Activated T-helper 1 cell treated with anti-CD3 and anti-CD28 coated beads, Interleukin-12 subunit alpha, Interleukin-12 subunit beta, Interleukin-2, Interleukin-4 antibody, amounts not matched to agents 30 ng/mL and 10 ng/mL and 1 ng/mL, durations not matched to agents 14 hours and 24 hours and 36 hours (primary cell): ENCODE measurements at regions of chrX and their contacts with region 1.

Region 1: DNA sequence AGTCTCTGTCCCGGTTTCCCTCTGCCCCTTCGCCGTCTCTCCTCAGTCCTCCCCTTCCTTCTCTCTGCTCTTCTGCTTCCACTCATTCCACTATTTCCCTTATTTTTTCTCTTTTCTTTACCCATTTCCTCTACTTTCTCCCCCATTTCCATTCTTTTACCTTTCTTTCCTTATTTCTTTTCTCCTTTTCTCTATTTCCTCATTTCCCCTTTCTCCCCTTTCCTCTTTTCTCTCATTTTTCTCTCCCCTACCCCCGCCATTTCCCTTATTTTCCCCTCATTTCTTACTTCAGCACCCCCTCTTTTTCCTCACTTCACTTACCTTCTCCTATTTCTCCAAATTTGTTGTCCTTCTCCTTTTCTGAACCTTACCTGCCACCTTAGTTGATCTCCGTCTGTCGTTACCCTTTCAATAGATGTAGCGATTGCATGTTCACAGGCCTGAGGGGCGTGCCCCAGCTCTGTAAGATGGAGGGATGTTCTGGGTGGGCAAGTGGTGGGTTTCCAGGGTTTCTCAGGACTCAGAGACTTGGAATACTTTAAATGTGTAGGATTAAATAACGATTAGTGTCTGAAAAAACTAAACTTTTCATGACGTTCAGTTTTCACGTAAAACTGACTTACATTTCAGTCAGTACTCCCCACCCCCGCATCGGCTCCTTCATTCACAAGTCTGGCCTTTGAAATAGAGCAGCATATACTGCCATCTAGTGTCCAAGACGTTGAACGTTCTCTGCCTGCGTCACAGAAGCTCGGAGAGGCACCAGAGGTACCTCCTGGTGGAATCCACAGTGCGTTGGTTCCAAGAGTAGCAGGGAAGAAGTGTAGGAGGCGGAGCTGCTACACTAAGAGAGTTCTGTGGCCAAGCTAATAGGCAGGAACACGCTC is 641 bp upstream of the NCBP2L start:
- DNase-seq: peak; percentile 62
- H3K4me3 Mint-ChIP-seq: peak overlapping the region; percentile 87
- H3K27ac Mint-ChIP-seq: peak overlapping the region; percentile 71
- H3K4me1 Mint-ChIP-seq: peaks cover 13% of the 10 kb centered on the region
- H3K27me3 Mint-ChIP-seq: peaks cover 12% of the 10 kb centered on the region

Region 2: DNA sequence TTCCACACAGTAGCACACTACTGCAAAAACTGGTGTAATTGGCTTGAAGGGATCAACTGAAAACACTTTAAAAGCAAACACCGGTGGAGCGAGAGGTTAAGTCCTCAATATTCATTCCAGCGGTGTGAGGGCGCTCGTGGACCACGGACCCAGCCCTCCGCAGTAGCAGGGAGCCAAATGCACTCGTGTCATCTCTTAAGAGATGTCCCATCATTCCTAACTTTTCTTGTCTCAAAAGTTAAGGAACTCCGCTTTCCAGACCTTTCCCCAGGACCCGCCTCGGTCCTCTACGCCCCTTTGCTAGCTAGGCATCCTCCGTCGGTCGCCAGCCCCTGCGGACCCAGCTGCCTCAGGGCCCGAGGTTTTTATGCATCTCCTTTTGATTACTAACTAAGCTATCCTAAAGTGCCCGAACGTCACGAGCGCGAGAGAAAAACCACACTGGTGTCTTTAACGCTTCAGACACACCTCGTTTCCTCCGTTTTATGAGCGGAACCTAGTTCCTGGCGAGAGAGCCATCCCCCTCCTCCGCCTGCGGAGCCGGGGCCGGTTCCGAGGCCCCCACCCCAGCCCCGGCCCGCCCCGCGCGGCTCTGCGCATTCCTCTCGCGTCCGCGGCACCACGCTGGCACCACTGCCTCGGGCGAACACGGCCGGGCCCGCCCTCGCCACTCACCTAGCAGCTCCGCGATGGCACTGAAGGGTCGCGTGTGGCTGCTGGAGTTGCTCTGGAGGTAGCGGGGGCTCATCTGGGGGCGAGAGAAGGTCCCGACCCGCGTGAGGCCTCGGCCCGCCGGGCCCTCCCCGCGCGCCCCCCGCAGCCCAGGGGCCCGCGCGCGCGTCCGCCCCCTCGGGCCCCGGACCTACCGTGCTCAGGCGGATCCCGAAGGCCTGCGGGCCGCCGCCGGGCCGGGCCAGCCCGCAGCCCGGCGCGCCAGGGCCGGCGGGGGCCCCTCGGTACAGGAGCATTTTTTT is 777.6 kb before region 1 on chrX:
- intact Hi-C with region 1: loop called (anchors 5 kb)
- DNase-seq: peak; percentile 12
- H3K4me3 Mint-ChIP-seq: peak overlapping the region; percentile 87
- H3K27ac Mint-ChIP-seq: no peak overlapping the region
- H3K4me1 Mint-ChIP-seq: peaks cover 12% of the 10 kb centered on the region
- H3K27me3 Mint-ChIP-seq: peaks cover 3% of the 10 kb centered on the region

Region 3: DNA sequence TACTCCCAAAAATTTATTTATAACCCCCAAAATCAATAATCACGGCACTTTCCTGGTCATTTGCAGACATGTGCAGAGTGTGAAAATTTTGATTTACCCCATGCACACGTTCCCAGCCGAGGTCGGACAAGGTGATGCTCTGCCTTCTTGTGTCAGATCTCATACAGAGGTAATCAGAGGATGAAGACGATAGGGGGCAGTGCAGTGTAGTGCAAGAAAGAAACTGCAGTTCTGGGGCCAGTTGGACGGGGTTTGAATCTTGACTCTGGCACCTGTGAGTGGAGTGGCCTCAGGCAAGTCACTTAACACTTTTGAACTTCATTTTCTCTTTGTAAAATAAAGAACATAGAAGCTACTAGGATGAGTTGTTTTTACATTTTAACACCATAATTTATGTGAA is 239.1 kb before region 1 on chrX:
- intact Hi-C with region 1: loop called (anchors 1 kb)
- DNase-seq: peak; percentile 6
- H3K4me3 Mint-ChIP-seq: no peak overlapping the region
- H3K27ac Mint-ChIP-seq: no peak overlapping the region
- H3K4me1 Mint-ChIP-seq: no peaks in the 10 kb centered on the region
- H3K27me3 Mint-ChIP-seq: peaks cover 8% of the 10 kb centered on the region

Region 4: DNA sequence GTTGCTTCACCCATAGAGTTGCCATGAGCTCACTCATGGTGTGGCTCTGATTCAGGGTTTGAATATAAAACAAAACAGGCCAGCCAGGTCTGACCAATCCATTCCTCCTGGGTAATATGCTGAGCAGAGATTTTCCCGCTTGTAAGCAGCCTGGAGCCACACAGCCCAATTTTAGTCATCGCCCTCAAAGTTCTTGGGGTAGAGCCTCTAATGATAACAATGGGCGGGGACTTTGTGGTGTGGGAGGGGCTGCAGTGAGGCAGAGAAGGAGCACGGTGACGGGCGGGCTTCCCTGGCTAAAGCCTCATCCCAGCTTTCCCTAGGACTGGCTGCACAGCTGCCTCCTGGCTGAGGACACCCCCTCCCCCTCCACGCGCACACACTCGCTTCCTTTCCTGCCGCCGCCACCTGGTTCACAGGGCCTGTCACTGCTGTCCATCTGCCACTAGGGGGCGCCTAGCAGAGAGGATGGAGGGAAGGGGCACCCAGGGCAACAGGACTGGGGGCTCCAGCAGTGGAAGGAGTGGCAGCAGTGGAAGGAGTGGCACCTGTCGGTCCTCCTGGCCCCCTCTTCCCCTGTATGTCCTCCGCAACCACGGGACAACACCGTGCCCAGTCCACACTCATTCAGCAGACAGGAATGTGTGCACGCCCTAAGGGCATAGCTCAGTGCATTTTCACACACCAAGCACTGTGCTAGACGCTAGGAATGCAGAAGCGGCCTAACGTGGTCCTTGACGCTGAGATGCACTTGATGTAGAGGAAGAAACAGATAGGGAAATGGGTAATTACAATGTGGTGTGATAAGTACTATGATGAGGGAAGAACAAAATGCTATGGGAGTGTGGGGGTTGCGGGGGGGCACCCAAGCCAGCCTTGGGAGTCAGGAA is 121.8 kb before region 1 on chrX:
- intact Hi-C with region 1: loop called (anchors 1 kb)
- DNase-seq: peak; percentile 38
- H3K4me3 Mint-ChIP-seq: no peak overlapping the region
- H3K27ac Mint-ChIP-seq: no peak overlapping the region
- H3K4me1 Mint-ChIP-seq: peaks cover 7% of the 10 kb centered on the region
- H3K27me3 Mint-ChIP-seq: no peaks in the 10 kb centered on the region

Region 5: DNA sequence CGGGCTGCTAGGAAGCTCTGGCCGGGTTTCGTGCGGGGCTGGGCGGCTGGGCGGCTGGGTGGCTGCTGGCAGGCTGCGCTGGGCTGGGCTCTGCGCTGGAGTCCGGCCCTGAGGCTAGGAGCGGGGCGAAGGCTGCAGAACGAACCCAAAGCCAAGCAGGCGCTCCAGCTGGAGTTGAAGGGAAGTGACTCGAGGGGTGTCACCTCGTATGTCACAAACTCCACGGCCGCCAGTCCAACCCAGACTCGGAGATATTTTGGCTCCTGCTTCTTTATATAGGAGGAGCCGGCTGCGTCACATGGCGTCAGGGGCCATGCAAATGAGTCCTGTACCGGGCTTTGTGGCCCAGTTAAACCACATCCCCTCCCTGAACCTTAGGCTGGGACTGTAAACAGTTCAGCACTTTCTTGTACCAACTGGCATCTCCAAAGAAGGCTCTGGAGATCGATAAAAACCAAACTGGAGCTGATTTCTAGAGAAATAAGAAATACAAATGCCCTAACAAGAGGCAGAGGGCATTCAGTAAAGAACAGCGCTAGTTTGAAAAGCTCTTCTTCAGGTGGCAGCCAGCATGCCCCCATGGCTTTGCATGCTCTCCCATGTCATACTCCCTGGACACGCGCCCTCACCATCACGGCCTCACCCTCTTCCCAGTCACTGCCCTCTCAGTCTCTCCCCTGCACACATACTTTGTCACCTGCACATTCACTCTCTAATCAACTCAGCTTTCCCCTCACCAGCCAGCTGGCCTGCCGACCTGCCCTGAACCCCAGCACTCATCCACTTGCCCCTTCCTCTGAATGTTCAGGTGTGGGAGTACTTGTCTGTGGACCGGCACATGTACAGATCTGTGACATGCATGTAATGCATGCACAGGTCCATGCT is 59.8 kb before region 1 on chrX:
- intact Hi-C with region 1: loop called (anchors 1 kb)
- DNase-seq: peak; percentile 84
- H3K4me3 Mint-ChIP-seq: peak overlapping the region; percentile 93
- H3K27ac Mint-ChIP-seq: peak overlapping the region; percentile 87
- H3K4me1 Mint-ChIP-seq: peaks cover 46% of the 10 kb centered on the region
- H3K27me3 Mint-ChIP-seq: no peaks in the 10 kb centered on the region

Region 6: GRCh38 chrX:107894038-107894437 is 117.1 kb after region 1 on chrX:
- intact Hi-C with region 1: loop called (anchors 1 kb)
- DNase-seq: peak; percentile 5
- H3K4me3 Mint-ChIP-seq: no peak overlapping the region
- H3K27ac Mint-ChIP-seq: no peak overlapping the region
- H3K4me1 Mint-ChIP-seq: no peaks in the 10 kb centered on the region
- H3K27me3 Mint-ChIP-seq: peaks cover 2% of the 10 kb centered on the region

Region 7: DNA sequence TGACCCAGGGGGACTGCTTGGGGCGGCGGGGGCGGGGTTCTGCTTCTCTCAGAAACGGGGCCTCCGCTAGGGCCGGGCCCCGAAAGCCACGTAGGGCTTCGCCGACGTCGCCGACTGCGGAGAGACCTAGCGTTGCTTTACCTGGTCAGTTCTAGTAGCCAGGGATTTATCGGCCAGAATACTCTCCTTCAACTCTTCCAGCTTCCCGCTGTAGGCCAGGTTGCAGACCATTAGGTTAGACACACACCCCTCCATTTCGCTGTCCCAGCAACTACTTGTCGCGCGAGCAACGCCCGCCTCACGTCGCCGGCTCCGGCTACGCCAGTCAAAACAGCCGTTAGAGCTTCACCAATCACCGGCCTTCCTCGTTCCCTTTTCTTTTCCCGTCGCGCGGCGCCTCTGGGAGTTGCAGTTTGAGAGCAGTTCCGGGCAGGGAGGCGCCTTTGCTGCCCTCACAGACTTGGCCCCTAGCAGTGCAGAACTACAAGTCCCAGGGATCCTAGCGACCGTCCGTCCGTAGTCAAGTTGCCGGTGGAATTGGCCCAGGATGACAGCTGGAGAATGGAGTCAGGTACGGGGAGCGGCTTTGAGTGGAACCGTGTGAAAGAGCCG is 314.5 kb after region 1 on chrX and contains the starts of genes ATG4A and PSMD10:
- intact Hi-C with region 1: loop called (anchors 1 kb)
- DNase-seq: peak; percentile 85
- H3K4me3 Mint-ChIP-seq: no peak within 1 kb of the TSS
- H3K27ac Mint-ChIP-seq: no peak within 1 kb of the TSS
- H3K4me1 Mint-ChIP-seq: peaks cover 17% of the 10 kb centered on the region
- H3K27me3 Mint-ChIP-seq: no peaks in the 10 kb centered on the region
- total RNA-seq, gene ATG4A: 9.6 and 9.8 TPM in 2 replicates
- total RNA-seq, gene PSMD10: 42.5 and 44.1 TPM in 2 replicates